Left ventricle myocardium superior (tissue), 1 donor: ENCODE measurements at regions of chr13 and their contacts with region 1.

Region 1: DNA sequence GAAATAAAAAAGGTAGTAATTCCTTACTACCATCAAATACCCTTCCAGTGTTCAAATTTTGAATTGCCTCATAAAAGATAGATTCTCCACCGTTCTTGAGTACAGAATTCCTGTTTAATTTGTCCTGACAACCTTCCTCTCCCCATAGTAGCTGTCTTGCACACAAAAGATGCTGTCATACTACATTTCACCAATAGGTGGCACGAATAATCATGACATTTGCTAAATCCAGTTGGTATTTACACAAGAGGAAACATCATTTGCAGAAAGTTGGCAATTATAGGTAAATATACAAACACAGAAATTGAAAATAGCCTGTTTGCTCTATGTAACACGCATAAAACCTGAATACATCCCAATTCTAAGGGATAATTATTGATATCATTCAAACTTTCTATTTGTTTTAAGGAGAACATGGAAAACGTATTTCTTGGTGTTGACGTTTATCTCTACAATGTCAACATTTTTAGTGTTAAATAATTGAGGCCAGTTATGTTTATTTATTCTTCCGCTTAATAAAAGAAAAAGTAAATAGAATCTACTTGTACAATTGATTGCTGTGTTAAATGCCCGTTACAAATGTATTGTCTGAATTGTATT is 58.3 kb upstream of the CLDN10 start:
- DNase-seq: no peak
- ATAC-seq: no peak

Region 2: GRCh38 chr13:95660981-95661581 is 166.9 kb after region 1 on chr13:
- intact Hi-C with region 1: loop called (anchors 10 kb)
- DNase-seq: no peak
- ATAC-seq: no peak